ENCODE measurements at regions of chr13 and their contacts with region 1.

Region 1: GRCh38 chr13:20182231-20182846 is 10.4 kb downstream of the GJB2 start:
- DNase-seq: no peak
- ATAC-seq: peak; percentile 77

Region 2: DNA sequence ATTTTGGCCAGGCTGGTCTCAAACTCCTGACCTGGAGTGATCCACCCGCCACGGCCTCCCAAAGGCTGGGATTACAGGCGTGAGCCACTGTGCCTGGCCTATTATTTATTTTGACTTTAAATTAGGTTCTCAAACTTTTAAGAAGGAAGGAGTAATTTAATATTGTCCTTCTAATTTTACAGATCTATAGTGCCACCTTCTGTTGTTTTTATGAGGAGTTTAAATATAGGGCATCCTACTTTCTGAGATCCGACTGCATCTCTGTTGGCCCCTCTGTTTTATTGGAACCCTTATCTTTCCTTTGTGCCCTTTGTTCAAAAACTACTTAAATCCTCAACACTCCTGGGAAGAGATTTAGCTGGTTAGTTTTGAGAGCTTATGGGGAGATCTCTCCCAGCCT is 293.5 kb before region 1 on chr13:
- intact Hi-C with region 1: no loop called
- DNase-seq: no peak
- ATAC-seq: no peak

Region 3: GRCh38 chr13:20231839-20232555 is 49.7 kb after region 1 on chr13 and contains the start of gene GJB6:
- intact Hi-C with region 1: no loop called
- DNase-seq: no peak
- ATAC-seq: peak; percentile 46
- total RNA-seq, gene GJB6: not detected

Region 4: DNA sequence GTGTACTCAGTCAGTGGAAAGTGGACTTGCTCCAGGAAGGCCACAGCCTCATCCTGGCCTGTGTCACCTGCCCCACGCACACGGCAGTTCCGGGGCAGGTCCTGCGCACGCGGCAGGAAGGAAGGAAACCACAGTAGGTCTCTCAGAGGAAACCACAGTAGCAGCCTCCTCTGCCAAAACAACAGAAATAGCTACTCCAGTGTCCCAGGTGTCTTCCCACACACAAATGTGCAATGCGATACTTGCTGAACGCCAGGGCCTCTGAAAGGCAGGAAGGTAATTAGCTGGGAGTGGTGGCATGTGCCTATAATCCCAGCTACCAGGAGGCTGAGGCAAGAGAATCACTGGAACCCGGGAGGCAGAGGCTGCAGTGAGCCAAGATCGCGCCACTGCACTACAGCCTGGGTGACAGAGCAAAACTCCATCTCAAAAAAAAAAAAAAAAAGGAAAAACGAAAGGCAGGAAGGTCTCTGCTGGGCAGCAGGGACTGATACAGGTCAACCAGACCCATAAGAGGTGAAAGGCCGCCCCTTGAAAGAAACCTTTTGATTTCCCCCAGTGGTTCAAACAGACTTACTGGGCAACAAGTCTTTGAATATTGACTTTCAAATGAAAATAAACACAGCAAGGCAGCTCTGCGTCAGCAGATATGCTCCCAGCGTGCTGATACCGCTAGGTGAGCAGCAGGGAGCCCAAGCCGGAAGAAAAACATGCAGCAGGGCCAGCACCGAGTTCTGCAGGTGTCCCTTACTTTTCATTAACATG is 293.8 kb after region 1 on chr13:
- intact Hi-C with region 1: no loop called
- DNase-seq: no peak
- ATAC-seq: no peak

Region 5: GRCh38 chr13:20489185-20489820 is 307.0 kb after region 1 on chr13:
- intact Hi-C with region 1: loop called (anchors 5 kb)
- DNase-seq: no peak
- ATAC-seq: peak; percentile 68

Measured in Right ventricle myocardium inferior (tissue), 1 donor.